ENCODE measurements at regions of chr16 and their contacts with region 1.

Region 1: GRCh38 chr16:68244903-68245853 is at the start of gene PLA2G15:
- DNase-seq: peak; percentile 98 to 99 (median 98)
- ATAC-seq: peak; percentile 91 to 97 (median 96)
- H3K4me3 ChIP-seq: peak within 1 kb of the TSS; percentile 65 to 98 (median 86)
- H3K27ac ChIP-seq: peak within 1 kb of the TSS in 11 of 12 donors; percentile 75 to 97 (median 87)
- H3K4me1 ChIP-seq: peaks cover 4 to 55% (median 47%) of the 10 kb centered on the region in 12 donors
- H3K27me3 ChIP-seq: no peaks in the 10 kb centered on the region
- CTCF ChIP-seq: peak in 1 of 12 donors; percentile 17
- POLR2A ChIP-seq: peak; percentile 78 to 94
- total RNA-seq, gene PLA2G15: 27.3 to 68.0 (median 45.4) TPM

Region 2: DNA sequence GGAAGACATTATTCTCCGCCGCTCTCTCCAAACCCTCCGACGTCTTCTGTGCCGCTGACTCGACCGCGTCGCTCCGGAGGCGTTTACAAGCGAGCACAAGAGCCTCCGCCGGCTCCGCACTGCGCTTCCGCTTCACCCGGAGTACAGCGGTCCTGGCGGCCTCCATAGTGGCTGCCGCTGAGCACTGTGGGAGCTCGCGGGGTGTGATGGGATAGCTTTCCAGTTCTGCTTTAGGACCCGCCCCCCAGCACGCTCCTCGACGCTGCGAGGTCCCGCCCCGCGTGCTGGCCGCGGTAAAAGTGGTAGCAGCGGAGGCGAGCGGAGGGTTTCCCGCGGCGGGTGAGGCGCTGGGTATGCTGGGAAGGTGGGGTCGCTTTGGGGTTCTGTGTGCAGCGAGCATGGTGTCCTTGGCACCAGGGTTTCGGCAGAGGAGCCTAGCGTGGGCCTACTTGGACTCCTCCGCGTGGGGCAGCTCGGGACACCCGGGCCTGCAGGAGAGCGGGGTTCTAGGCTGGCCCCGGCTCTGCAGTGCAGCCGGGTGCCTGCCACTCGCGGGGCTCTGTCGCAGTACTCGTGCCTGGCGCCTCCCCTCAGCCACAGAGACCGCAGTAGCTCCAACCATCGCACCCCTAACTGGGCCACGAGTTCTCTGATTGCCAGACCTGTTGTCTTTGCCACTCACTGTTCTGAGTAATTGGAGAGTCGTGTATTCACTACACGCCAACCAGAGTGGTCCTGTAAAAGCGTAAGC is 65.8 kb after region 1 on chr16 and contains the starts of genes PRMT7 and SLC7A6OS:
- intact Hi-C with region 1: loop called in 3 of 10 experiments (anchors 5 kb)
- DNase-seq: peak; percentile 91 to 94 (median 93)
- ATAC-seq: peak; percentile 100
- H3K4me3 ChIP-seq: peak within 1 kb of the TSS; percentile 69 to 98 (median 89)
- H3K27ac ChIP-seq: peak within 1 kb of the TSS; percentile 15 to 95 (median 83)
- H3K4me1 ChIP-seq: peaks cover 6 to 37% (median 26%) of the 10 kb centered on the region in 12 donors
- H3K27me3 ChIP-seq: no peaks in the 10 kb centered on the region
- CTCF ChIP-seq: peak in 7 of 12 donors; percentile 27 to 64 (median 39)
- POLR2A ChIP-seq: peak in 1 of 2 donors; percentile 76
- total RNA-seq, gene PRMT7: 21.9 to 34.0 (median 30.7) TPM
- total RNA-seq, gene SLC7A6OS: 8.1 to 16.2 (median 11.2) TPM

Region 3: GRCh38 chr16:68328151-68328859 is 83.1 kb after region 1 on chr16:
- intact Hi-C with region 1: loop called in 5 of 10 experiments (anchors 1 to 5 kb)
- DNase-seq: peak; percentile 76 to 84 (median 81)
- ATAC-seq: peak; percentile 85 to 95 (median 94)
- H3K4me3 ChIP-seq: no peak overlapping the region
- H3K27ac ChIP-seq: no peak overlapping the region
- H3K4me1 ChIP-seq: peaks cover 0 to 27% (median 7%) of the 10 kb centered on the region in 12 donors
- H3K27me3 ChIP-seq: no peaks in the 10 kb centered on the region
- CTCF ChIP-seq: peak; percentile 85 to 97 (median 92)
- POLR2A ChIP-seq: no peak

Region 4: GRCh38 chr16:68345351-68345810 is 100.2 kb after region 1 on chr16:
- intact Hi-C with region 1: no loop called
- DNase-seq: peak in 2 of 5 donors; percentile 31 to 63
- ATAC-seq: peak; percentile 77 to 80 (median 78)
- H3K4me3 ChIP-seq: no peak overlapping the region
- H3K27ac ChIP-seq: peak overlapping the region in 7 of 12 donors; percentile 18 to 70 (median 55)
- H3K4me1 ChIP-seq: peaks cover 0 to 18% (median 3%) of the 10 kb centered on the region in 12 donors
- H3K27me3 ChIP-seq: no peaks in the 10 kb centered on the region
- CTCF ChIP-seq: no peak
- POLR2A ChIP-seq: no peak

Region 5: DNA sequence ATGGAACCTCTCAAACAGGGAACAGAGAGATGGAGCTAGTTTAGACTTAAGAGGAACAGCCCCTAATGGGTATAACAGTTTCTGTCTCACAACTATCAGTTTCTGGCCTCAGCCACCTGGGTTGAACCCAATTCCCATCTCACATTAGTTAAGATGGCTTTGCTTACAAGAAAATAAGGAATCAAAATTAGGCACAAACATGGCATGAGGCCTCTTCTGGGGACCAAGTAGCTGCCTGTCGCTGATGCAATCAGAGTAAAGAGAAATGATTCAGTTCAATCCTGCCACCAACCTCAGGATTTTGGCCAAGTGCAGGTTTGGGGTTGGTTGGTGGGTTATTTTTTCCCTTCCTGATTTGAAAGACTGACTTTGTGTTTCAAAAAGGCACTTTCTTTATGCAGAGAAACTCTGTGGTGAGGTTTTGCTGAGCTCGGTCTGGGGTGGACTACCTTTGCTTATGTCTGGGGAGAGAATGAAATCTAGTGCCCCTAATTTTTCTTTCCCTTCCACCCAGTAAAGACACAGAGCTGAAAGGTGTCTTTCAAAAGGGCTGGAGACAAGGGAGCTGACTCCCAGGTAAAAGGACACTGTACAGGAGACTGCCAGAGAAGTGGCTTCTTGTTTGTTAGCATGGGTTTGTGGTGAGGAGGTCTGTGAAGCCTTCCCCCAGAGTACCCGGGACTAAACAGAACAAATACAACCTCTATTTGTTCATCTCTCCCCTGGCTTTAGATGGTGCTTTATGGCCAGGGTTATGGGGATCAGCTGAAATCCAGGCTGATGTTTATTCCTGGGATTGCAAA is 1275.8 kb after region 1 on chr16:
- intact Hi-C with region 1: loop called in 1 of 10 experiments (anchors 10 kb)
- DNase-seq: no peak
- ATAC-seq: no peak
- H3K4me3 ChIP-seq: no peak overlapping the region
- H3K27ac ChIP-seq: no peak overlapping the region
- H3K4me1 ChIP-seq: no peaks in the 10 kb centered on the region
- H3K27me3 ChIP-seq: no peaks in the 10 kb centered on the region
- CTCF ChIP-seq: no peak
- POLR2A ChIP-seq: no peak

Measured in heart left ventricle (tissue), 16 donors.